ENCODE measurements at regions of chr13 and their contacts with region 1.

Region 1: GRCh38 chr13:49545661-49546060 is 39.7 kb downstream of the RCBTB1 start:
- DNase-seq: no peak
- ATAC-seq: no peak
- H3K4me3 ChIP-seq: no peak overlapping the region
- H3K27ac ChIP-seq: no peak overlapping the region
- H3K4me1 ChIP-seq: no peaks in the 10 kb centered on the region
- H3K27me3 ChIP-seq: no peaks in the 10 kb centered on the region
- CTCF ChIP-seq: no peak
- POLR2A ChIP-seq: no peak
- RAD21 ChIP-seq: no peak

Region 2: DNA sequence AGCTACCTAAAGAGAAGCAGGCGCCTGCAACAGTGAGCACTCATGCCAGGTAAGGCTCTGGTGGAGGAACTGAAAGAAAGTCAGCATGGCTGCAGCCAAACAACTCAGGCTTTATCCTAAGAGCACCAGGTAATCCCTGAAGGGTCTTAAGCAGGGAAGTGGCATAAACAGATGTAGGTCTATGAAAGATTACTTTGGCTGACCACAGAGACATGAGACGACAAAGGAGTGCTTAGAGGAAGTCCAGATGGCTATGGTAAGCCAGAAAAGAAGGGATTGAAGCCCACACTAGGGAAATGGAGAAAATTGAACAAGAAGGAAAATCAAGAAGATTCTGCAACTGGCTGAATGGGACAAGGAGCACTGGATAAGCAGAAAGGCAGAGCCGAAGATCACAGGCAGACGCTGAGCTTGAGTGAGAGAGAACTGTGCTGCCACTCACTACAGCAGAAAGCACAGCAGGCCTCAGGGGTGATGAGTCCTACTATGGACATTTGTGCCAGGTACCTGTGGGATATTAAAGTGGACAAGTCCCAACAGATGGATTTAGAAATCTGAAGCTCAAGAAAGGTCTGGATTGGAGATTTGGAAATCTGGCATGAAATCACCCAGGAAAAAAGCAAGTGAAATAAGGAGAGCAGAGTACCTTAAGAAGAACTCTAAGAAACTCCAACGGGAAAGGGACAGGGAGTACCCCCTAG is 35.5 kb after region 1 on chr13:
- CTCF ChIA-PET with region 1: no interaction called
- POLR2A ChIA-PET with region 1: no interaction called
- dilution Hi-C with region 1: no loop called
- in situ Hi-C with region 1: no loop called
- intact Hi-C with region 1: loop called (anchors 1 kb)
- DNase-seq: no peak
- ATAC-seq: no peak
- H3K4me3 ChIP-seq: no peak overlapping the region
- H3K27ac ChIP-seq: no peak overlapping the region
- H3K4me1 ChIP-seq: peaks cover 3% of the 10 kb centered on the region
- H3K27me3 ChIP-seq: no peaks in the 10 kb centered on the region
- CTCF ChIP-seq: no peak
- POLR2A ChIP-seq: no peak
- RAD21 ChIP-seq: no peak